Activated CD4-positive, alpha-beta memory T cell treated with anti-CD3 and anti-CD28 coated beads, Interleukin-2, amount 10 ng/mL, durations not matched to agents 7 days and 5 days (primary cell): ENCODE measurements at regions of chr17 and their contacts with region 1.

Region 1: GRCh38 chr17:27892866-27893769 is at the start of gene LYRM9:
- DNase-seq: peak; percentile 93
- H3K4me3 Mint-ChIP-seq: peak within 1 kb of the TSS; percentile 78
- H3K27ac Mint-ChIP-seq: peak within 1 kb of the TSS; percentile 50
- H3K4me1 Mint-ChIP-seq: peaks cover 16% of the 10 kb centered on the region
- H3K27me3 Mint-ChIP-seq: peaks cover 26% of the 10 kb centered on the region
- total RNA-seq, gene LYRM9: 6.0 to 6.1 TPM

Region 2: DNA sequence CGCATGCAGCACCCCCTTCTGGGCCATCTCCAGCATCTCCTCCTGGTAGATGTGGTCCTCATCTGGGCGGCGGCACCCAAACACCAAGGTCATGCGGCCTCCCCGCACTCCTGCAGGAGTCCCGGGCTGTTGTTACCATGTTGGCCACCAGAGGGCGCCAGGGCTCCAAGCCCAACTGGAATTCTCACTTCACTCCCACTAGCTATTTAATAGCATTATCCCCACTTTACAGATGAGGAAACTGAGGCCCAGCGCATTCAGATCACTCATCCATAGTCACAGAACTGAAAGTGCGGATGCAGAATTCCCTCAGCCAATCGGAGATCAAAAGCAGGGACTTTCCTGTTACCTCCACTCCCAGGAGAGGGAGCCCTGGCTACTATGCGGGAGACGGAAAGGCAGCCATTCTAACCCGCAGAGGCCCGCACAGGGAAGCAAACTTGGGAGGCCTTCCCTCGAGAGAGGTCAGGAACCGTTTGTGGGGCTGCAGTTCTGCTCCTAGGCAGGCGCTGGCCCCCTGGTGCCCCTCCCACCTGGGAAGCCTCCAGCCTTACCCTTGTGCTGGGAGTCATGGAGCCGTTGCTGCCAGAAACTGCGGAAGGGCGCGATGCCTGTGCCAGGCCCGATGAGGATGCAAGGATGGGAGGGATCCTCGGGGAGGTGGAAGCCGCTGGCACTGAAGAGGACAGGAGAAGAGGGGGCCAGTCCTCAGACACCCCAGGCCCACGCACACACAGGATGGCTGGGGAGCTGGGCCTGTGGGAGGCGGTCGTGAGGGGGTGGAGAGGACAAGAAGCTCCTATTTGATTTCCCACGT is 132.8 kb before region 1 on chr17:
- CTCF ChIA-PET with region 1: interaction called, 11 read pairs
- POLR2A ChIA-PET with region 1: no interaction called
- DNase-seq: peak; percentile 73
- H3K4me3 Mint-ChIP-seq: no peak overlapping the region
- H3K27ac Mint-ChIP-seq: no peak overlapping the region
- H3K4me1 Mint-ChIP-seq: no peaks in the 10 kb centered on the region
- H3K27me3 Mint-ChIP-seq: no peaks in the 10 kb centered on the region

Region 3: GRCh38 chr17:27797390-27798091 is 95.6 kb before region 1 on chr17:
- CTCF ChIA-PET with region 1: interaction called, 12 read pairs
- POLR2A ChIA-PET with region 1: no interaction called
- DNase-seq: no peak
- H3K4me3 Mint-ChIP-seq: no peak overlapping the region
- H3K27ac Mint-ChIP-seq: no peak overlapping the region
- H3K4me1 Mint-ChIP-seq: peaks cover 3% of the 10 kb centered on the region
- H3K27me3 Mint-ChIP-seq: peaks cover 46% of the 10 kb centered on the region

Region 4: DNA sequence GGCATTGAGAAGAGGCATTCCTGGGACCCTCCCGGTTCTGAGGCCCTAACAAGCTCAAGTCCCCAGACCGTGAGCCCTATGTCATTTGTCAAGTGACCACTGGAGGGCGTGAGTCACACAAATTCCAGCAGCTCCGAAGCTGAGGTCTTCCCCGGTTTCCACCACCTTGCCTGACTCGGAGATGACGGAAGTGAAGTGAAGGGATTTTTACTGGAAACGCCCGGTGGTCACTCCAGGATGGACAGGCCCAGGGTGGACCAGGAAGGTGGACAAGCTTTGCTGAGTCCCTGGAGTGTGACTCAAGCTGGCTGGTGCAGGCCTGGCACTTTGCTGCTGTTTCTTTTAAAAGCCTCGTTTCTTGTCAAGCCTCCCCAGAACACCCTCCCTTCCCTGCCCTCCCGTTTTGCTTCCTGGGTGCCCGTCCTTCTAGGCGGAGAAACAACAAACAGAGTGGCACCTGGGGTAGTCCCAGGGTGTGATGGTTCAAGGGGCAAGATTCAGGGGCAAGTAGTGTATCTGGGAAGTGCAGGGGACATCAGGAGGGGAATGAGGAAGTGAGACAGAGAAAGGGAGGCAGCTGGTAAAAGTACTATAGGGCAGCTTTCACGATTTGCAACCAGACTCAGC is 87.5 kb before region 1 on chr17:
- CTCF ChIA-PET with region 1: interaction called, 184 read pairs
- POLR2A ChIA-PET with region 1: interaction called, 67 read pairs
- DNase-seq: peak; percentile 87
- H3K4me3 Mint-ChIP-seq: peak overlapping the region; percentile 44
- H3K27ac Mint-ChIP-seq: peak overlapping the region; percentile 84
- H3K4me1 Mint-ChIP-seq: peaks cover 46% of the 10 kb centered on the region
- H3K27me3 Mint-ChIP-seq: no peaks in the 10 kb centered on the region

Region 5: DNA sequence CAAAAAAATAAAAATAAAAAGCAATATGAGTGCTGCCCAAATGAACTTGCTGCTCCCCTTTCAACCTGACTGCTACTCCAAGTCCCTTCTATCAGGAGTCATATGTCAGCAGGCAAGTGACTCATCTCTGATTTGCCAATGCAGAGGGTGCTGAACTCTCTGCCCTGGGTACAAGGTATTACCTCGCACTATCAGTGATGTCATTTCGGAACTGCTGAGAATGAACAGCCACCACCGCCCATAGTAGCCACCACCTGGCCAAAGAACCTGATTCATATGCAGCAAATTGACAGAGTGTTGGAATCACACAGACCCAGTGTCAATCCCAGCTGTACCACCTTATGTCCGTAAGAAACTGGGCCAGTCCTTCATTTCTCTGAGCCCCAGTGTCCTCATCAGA is 31.1 kb before region 1 on chr17:
- CTCF ChIA-PET with region 1: no interaction called
- POLR2A ChIA-PET with region 1: no interaction called
- DNase-seq: no peak
- H3K4me3 Mint-ChIP-seq: no peak overlapping the region
- H3K27ac Mint-ChIP-seq: no peak overlapping the region
- H3K4me1 Mint-ChIP-seq: peaks cover 2% of the 10 kb centered on the region
- H3K27me3 Mint-ChIP-seq: no peaks in the 10 kb centered on the region

Region 6: DNA sequence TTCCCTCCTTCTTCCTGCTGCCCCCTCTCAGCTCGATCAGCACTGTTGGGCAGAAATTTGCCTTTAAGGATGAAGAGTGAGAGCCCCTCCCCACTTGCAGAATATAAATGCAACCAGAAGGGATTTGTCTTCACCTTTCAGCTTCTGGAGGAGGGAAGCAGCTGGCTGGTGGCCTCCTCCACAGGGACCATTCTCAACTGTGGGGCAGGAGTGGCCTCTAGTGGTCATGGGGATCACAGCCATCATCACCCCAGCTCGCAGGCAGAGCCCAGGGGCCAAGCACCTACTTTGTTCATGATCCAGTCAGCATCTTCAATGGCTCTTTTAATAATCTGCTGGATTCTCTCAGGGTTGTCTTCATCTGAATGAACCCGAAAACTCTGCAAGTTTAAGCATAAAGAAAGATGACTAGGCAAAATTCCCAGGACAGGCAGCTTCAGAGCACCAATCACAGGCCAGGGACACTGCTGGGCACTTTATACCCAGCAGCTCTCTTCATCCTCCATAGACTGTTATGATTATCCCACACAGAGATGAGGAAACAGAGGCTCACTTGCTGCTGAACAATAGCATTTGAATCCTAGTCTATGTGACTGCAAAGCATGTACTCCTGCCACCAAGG is 13.0 kb before region 1 on chr17:
- CTCF ChIA-PET with region 1: interaction called, 59 read pairs
- POLR2A ChIA-PET with region 1: interaction called, 21 read pairs
- DNase-seq: peak; percentile 77
- H3K4me3 Mint-ChIP-seq: no peak overlapping the region
- H3K27ac Mint-ChIP-seq: no peak overlapping the region
- H3K4me1 Mint-ChIP-seq: peaks cover 23% of the 10 kb centered on the region
- H3K27me3 Mint-ChIP-seq: no peaks in the 10 kb centered on the region

Region 7: DNA sequence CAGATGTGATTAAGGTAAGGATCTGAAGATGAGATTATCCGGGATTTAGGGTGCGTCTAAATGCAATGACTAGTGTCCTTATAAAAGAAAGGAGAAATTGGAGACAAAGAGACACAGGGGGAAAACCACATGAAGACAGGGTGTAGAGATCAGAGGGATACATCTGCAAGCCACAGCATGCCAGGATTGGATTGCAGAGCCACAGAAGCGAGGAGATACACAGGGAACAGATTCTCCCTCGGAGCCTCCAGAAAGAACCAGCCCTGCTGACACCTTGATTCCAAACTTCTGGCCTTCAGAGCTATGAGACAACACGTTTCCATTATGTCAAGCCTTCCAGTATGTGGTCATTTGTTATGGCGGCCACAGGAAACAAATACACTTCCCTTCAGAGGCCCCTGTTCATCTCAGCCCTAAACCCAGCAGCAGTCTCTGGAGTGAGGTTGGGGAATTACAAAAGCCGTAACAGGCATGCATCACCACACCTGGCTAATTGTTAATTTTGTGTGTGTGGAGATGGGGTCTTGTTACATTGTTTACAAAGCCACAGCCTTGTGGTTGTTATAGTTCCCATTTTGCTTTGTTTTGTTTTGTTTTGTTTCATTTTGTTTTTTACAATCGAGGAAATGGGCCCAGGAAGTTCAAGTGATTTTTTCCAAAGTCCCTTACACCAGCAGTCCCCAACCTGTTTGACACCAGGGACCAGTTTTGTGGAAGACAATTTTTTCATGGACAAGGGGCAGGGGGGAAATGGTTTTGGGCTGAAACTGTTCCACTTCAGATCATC is 51.6 kb after region 1 on chr17:
- CTCF ChIA-PET with region 1: no interaction called
- POLR2A ChIA-PET with region 1: no interaction called
- DNase-seq: no peak
- H3K4me3 Mint-ChIP-seq: no peak overlapping the region
- H3K27ac Mint-ChIP-seq: no peak overlapping the region
- H3K4me1 Mint-ChIP-seq: no peaks in the 10 kb centered on the region
- H3K27me3 Mint-ChIP-seq: no peaks in the 10 kb centered on the region

Region 8: DNA sequence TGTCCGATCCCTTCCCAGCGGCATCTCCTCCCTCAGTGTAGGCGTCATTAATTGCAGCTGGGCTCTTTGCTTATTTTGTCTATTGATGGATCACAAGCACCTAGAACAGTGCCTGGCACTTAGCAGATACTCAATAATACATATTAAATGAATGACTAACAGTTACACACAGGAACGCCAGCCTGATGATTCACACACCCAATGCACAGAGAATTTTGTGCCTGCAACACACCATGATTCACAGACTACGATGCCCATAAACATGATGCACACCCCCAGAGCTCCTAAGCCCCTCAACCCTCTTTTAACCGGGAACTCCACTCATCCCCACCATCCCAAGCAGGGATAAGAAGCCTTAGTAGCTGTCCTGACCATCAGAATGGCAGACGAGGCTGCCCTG is 359.3 kb after region 1 on chr17:
- CTCF ChIA-PET with region 1: interaction called, 11 read pairs
- POLR2A ChIA-PET with region 1: no interaction called
- DNase-seq: no peak
- H3K4me3 Mint-ChIP-seq: no peak overlapping the region
- H3K27ac Mint-ChIP-seq: no peak overlapping the region
- H3K4me1 Mint-ChIP-seq: peaks cover 9% of the 10 kb centered on the region
- H3K27me3 Mint-ChIP-seq: peaks cover 2% of the 10 kb centered on the region